Natural killer cell (primary cell): ENCODE measurements at regions of chr12 and their contacts with region 1.

Region 1: GRCh38 chr12:124940549-124941527 is 26.4 kb upstream of the UBC start:
- DNase-seq: peak; percentile 64 to 91
- ATAC-seq: peak; percentile 51 to 74 (median 63)
- H3K4me3 ChIP-seq: peak overlapping the region; percentile 66
- H3K4me3 Mint-ChIP-seq: no peak overlapping the region
- H3K27ac ChIP-seq: peak overlapping the region; percentile 80
- H3K27ac Mint-ChIP-seq: no peak overlapping the region
- H3K4me1 ChIP-seq: peaks cover 28% of the 10 kb centered on the region
- H3K4me1 Mint-ChIP-seq: no peaks in the 10 kb centered on the region
- H3K27me3 ChIP-seq: no peaks in the 10 kb centered on the region
- H3K27me3 Mint-ChIP-seq: no peaks in the 10 kb centered on the region
- CTCF ChIP-seq: peak; percentile 81

Region 2: DNA sequence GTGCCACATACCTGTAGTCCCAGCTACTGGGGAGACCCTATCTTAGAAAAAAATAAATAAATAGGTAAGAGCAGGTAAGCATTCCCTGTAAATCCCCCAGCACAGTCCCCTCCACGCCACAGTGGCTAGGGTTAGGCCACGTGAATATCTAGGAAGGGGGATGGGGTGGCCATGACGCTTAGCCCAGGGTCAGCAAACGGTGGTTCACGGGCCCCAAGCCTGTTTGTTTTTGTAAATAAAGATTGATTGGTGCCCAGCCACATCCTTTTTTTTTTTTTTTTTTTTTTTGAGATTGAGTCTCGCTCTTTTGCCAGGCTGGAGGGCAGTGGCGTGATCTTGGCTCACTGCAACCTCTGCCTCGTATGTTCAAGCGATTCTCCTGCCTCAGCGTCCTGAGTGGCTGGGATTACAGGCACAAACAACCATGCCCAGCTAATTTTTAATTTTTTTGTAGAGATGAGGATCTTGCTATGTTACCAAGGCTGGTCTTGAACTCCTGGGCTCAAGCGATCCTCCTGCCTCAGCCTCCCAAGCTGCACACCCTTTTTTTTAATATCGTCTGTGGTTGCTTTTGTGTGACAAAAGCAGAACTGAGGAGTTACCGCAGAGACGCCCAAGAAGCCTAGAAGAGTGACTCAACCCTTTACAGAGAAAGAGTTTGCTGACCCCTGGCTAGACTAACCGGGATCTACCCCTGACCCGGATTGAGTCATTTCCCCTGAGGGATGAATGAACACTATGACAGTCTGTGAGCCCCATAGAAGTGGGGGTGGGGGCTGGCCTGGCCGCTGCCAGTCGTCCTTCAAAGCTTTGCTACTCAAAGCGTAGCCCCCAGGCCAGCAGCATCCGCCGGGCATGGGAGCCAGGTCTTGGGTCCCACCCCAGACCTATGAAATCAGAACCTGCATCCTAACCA is 259.7 kb before region 1 on chr12:
- intact Hi-C with region 1: no loop called
- DNase-seq: peak in 1 of 2 donors; percentile 33
- ATAC-seq: peak in 2 of 3 donors; percentile 38 to 84
- H3K4me3 ChIP-seq: no peak overlapping the region
- H3K4me3 Mint-ChIP-seq: no peak overlapping the region
- H3K27ac ChIP-seq: no peak overlapping the region
- H3K27ac Mint-ChIP-seq: no peak overlapping the region
- H3K4me1 ChIP-seq: peaks cover 16% of the 10 kb centered on the region
- H3K4me1 Mint-ChIP-seq: peaks cover 0 to 5% of the 10 kb centered on the region in 2 donors
- H3K27me3 ChIP-seq: no peaks in the 10 kb centered on the region
- H3K27me3 Mint-ChIP-seq: peaks cover 9 to 15% of the 10 kb centered on the region in 2 donors
- CTCF ChIP-seq: no peak

Region 3: GRCh38 chr12:124884587-124885438 is 56.0 kb before region 1 on chr12:
- intact Hi-C with region 1: no loop called
- DNase-seq: no peak
- ATAC-seq: no peak
- H3K4me3 ChIP-seq: no peak overlapping the region
- H3K4me3 Mint-ChIP-seq: no peak overlapping the region
- H3K27ac ChIP-seq: peak overlapping the region; percentile 42
- H3K27ac Mint-ChIP-seq: no peak overlapping the region
- H3K4me1 ChIP-seq: peaks cover 26% of the 10 kb centered on the region
- H3K4me1 Mint-ChIP-seq: peaks cover 0 to 9% of the 10 kb centered on the region in 2 donors
- H3K27me3 ChIP-seq: no peaks in the 10 kb centered on the region
- H3K27me3 Mint-ChIP-seq: no peaks in the 10 kb centered on the region
- CTCF ChIP-seq: no peak

Region 4: DNA sequence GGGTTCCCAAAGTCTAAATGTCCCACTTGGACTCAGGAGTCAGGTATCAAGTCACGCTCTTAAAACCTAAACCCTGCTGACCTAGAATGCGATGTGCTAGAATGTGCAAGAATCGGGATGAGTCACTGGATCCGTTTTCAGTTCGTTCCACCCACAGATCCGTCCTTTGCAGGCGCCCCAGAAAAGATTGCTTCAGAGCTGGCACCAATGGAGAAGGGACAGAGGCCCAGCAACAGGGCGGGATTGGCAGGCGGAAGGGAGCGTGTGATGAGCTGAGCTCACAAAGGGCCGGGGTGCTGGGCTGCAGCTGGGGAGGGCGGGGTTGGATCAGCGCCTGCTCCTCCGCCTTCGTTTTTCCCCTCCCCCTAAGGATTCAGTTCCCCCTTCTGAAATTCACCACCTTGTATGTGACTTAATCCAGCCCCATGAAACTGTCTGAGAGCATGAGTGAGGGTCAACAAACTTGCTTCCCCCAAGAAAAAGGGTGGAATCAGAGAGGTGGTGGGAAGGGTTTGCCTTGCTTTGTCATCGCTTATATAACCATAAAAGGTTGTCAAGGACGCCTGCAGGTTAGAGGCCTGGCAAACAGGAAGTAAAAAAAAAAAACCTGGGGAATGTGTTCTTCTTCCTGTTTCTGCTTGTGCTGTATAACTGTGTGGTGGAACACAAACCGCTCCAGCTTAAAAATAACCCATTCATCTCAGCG is 23.6 kb before region 1 on chr12:
- intact Hi-C with region 1: loop called (anchors 2 kb)
- DNase-seq: peak; percentile 87 to 97
- ATAC-seq: peak; percentile 71 to 88 (median 79)
- H3K4me3 ChIP-seq: peak overlapping the region; percentile 25
- H3K4me3 Mint-ChIP-seq: peak overlapping the region; percentile 92
- H3K27ac ChIP-seq: peak overlapping the region; percentile 91
- H3K27ac Mint-ChIP-seq: peak overlapping the region; percentile 100
- H3K4me1 ChIP-seq: peaks cover 74% of the 10 kb centered on the region
- H3K4me1 Mint-ChIP-seq: peaks cover 87 to 90% of the 10 kb centered on the region in 2 donors
- H3K27me3 ChIP-seq: no peaks in the 10 kb centered on the region
- H3K27me3 Mint-ChIP-seq: no peaks in the 10 kb centered on the region
- CTCF ChIP-seq: no peak

Region 5: DNA sequence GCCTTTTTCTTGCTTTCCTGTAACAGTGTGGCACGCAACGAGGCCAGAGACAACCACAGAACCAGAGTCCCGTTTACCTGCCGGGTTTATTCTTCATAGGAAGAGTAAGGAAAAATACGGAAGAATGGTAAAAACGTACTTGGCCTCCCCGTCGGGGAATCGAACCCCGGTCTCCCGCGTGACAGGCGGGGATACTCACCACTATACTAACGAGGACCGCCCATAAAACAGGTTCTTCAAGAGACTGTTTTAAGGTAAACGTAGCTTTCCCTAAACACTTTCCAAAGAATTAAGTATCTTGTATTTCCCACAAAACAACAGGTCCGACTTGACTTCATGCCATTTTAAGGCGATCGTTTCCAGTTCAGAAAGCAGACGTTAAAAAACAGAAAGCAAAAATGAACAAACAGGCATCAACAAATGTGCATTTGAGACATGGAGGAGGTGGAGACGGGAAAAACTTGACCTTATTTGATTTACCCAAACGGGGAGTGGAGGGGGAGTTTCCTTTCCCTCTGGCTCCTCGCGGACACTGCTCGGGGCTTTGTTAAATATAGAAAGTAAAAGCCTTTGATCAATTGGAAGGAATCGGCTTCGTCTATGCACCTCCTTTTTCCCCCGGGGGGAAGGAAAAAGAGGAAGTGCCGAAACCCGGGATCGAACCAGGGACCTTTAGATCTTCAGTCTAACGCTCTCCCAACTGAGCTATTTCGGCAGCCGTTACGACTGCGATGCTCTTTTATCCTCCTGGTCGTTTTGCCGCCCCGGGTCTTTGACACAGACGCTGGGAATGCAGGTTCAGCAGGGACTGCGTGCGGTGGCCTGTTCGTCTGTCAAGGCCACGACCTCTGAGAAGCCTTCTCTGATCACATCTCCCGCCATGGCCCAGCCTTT is 13.4 kb before region 1 on chr12:
- intact Hi-C with region 1: loop called (anchors 1 kb)
- DNase-seq: peak; percentile 90 to 95
- ATAC-seq: peak; percentile 88 to 93 (median 90)
- H3K4me3 ChIP-seq: peak overlapping the region; percentile 42
- H3K4me3 Mint-ChIP-seq: peak overlapping the region; percentile 98
- H3K27ac ChIP-seq: peak overlapping the region; percentile 43
- H3K27ac Mint-ChIP-seq: peak overlapping the region; percentile 94 to 99
- H3K4me1 ChIP-seq: peaks cover 18% of the 10 kb centered on the region
- H3K4me1 Mint-ChIP-seq: peaks cover 30 to 38% of the 10 kb centered on the region in 2 donors
- H3K27me3 ChIP-seq: no peaks in the 10 kb centered on the region
- H3K27me3 Mint-ChIP-seq: peaks cover 0 to 3% of the 10 kb centered on the region in 2 donors
- CTCF ChIP-seq: no peak